Left ventricle myocardium inferior (tissue), 1 donor: ENCODE measurements at regions of chr4 and their contacts with region 1.

Region 1: DNA sequence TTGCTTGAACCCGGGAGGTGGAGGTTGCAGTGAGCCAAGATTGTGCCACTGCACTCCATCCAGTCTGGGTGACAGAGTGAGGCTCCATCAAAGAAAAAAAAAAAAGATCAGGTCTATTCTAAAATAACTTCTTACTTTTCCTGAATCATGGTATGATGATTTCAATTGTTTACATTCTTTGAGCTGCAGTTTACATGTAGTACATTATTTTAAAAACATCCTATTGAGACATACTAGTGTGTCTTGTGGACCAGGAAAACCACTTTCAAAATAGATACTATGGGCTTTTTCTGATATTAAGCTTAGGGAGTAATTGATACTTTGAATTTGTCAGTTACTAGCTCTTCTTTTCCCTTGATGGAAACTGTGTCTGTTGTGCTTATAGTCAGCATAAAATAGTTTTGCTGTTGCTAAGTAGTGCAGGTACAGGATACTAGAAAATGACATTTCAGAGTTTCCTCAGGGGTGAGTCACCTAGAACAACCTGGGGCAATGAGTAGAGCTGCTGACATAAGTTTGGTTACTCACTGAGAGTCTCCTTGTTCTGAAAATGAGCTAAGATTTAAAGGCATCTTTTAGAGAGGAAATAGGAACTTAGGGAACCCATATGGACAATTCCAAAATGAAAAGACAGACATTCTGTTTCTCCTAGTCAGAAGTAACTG is 53.2 kb upstream of the C4orf54 start:
- DNase-seq: no peak
- H3K4me3 ChIP-seq: no peak overlapping the region
- H3K27ac ChIP-seq: no peak overlapping the region
- H3K4me1 ChIP-seq: peaks cover 31% of the 10 kb centered on the region
- H3K27me3 ChIP-seq: no peaks in the 10 kb centered on the region
- CTCF ChIP-seq: no peak

Region 2: DNA sequence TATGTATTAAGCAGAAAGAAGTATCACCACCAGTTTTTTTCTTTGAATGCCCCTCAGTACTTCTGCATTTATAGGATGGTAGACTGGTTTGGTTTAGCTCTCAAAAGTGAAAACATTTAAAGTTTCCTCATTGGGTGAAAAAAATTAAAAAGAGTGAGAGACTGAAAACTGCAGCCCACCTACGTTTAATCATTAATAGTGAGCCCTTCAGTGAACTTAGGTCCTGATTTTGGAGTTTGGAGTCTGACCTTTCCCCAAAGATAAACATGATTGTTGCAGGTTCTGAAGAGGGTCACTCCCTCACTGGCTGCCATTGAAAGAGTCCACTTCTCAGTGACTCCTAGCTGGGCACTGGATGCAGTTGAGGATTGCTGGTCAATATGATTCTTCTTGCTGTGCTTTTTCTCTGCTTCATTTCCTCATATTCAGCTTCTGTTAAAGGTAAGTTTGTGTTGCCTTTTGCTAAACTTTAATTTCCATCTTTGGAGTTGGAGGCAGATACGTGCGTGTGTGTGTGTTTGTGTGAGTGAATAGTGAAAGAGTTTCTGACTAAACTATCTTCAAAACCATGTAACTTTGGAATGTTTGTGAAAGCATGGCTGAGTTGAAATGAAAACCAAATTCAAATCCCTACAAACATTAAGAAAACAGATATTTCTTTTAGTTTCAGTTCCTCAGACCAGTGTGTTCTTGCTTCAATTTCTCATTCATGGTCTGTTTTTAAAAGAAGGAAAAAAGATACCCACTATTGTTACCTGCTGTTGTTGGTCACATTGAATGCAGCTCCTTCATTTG is 136.1 kb before region 1 on chr4 and contains the start of gene MTTP:
- intact Hi-C with region 1: loop called (anchors 10 kb)
- DNase-seq: no peak
- H3K4me3 ChIP-seq: no peak within 1 kb of the TSS
- H3K27ac ChIP-seq: no peak within 1 kb of the TSS
- H3K4me1 ChIP-seq: no peaks in the 10 kb centered on the region
- H3K27me3 ChIP-seq: peaks cover 24% of the 10 kb centered on the region
- CTCF ChIP-seq: no peak
- total RNA-seq, gene MTTP: 3.7 TPM

Region 3: GRCh38 chr4:99783940-99784339 is 73.1 kb after region 1 on chr4:
- intact Hi-C with region 1: no loop called
- DNase-seq: no peak
- H3K4me3 ChIP-seq: no peak overlapping the region
- H3K27ac ChIP-seq: no peak overlapping the region
- H3K4me1 ChIP-seq: no peaks in the 10 kb centered on the region
- H3K27me3 ChIP-seq: no peaks in the 10 kb centered on the region
- CTCF ChIP-seq: no peak